Caco-2 (cell line): ENCODE measurements at regions of chr17 and their contacts with region 1.

Region 1: DNA sequence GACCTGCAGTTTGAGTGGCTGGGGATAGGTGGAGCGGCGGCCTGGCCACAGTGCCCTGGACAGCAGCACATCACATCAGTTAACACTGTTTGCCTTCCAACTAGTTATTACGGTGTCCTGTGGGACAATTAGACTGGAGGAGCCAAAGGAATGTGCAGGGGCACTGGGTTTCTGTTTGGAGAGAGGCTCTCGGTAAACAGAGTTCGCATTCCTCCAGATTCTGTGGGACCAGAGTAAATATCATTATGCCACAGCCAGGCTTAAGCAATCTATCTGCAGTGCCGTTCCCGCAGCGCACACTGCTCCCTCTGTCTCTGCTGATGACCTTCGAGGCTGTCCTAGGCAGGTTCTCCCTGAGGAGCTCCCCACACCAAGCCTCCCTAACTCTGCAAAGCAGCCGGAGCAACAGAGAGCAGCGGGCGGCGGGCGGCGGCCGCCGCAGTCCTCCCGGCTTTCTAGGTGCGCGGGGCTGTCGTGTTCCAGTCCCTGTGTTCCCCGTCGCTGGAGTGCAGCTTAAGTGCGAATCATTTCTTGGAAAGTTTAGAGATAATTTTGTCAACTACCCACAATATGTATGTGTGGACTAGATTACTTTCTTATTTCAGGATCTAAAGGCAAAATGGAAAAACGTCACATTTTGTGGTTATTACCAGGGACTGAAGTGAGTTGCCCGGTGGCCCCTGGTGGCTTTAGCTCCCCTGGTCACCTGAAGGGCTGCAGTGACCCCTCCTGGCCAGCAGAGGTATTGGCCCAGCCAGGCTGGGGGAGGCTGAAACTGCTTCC is 43.2 kb downstream of the PGS1 start:
- DNase-seq: peak; percentile 93 to 96
- H3K4me3 ChIP-seq: peak overlapping the region; percentile 1; the same call in 1 of the 2 replicates
- H3K4me3 Mint-ChIP-seq: peak overlapping the region; percentile 72
- H3K27ac Mint-ChIP-seq: peak overlapping the region; percentile 95
- H3K4me1 ChIP-seq: peaks cover 37% of the 10 kb centered on the region
- H3K4me1 Mint-ChIP-seq: peaks cover 28% of the 10 kb centered on the region
- H3K27me3 ChIP-seq: no peaks in the 10 kb centered on the region
- H3K27me3 Mint-ChIP-seq: no peaks in the 10 kb centered on the region
- CTCF ChIP-seq: peak; percentile 98 to 99

Region 2: GRCh38 chr17:78250891-78251794 is 170.5 kb before region 1 on chr17:
- CTCF ChIA-PET with region 1: interaction called, 30 read pairs
- POLR2A ChIA-PET with region 1: interaction called, 4 read pairs
- intact Hi-C with region 1: loop called (anchors 1 kb)
- DNase-seq: peak; percentile 87 to 93
- H3K4me3 ChIP-seq: no peak overlapping the region
- H3K4me3 Mint-ChIP-seq: no peak overlapping the region
- H3K27ac Mint-ChIP-seq: peak overlapping the region; percentile 45
- H3K4me1 ChIP-seq: peaks cover 17% of the 10 kb centered on the region
- H3K4me1 Mint-ChIP-seq: peaks cover 21% of the 10 kb centered on the region
- H3K27me3 ChIP-seq: no peaks in the 10 kb centered on the region
- H3K27me3 Mint-ChIP-seq: no peaks in the 10 kb centered on the region
- CTCF ChIP-seq: peak; percentile 99

Region 3: DNA sequence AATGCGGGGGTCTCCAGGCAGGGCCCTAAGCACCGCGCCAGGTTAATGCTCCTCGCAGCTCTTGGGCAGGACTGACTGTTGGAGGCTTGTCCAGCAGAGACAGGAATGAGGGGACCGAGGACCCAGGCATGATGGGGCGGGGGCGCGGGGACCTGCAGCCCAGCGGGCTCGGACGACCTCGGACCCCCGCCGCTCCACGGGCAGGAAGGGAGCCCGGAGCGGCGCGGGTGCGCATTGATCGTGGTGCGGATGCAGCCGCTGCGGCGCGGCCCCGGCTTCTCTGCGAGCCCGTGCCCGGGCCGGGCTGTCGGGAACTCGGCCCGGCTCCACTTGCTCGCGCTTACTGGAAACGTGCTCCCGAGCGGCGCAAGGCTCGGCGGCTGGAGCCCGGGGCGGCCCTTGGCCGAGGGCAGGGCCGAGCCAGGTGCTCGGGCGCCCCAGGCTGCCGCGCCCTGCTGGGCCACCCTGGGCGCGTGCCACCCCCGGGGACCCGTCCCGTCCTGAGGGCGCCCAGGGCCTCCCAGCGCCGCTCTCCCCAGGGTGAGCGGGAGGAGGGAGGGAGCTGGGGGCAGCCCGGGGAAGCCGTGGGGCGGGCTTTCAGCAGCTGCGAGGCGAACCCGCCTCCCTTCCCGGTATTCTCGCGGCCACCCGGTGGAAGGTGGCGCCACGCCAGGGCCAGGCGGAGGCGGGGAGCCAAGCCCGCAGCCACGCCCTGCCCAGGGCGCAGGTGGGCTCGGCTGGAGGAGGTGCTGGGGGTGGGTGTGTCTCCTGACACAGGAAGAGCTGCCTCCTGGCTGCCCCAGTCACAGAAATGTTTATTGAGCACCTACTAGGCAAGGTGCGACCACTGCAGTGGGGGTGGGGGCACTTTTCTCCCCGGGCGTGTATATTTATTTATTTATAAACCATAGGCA is 107.7 kb before region 1 on chr17:
- CTCF ChIA-PET with region 1: interaction called, 10 read pairs
- POLR2A ChIA-PET with region 1: interaction called, 6 read pairs
- intact Hi-C with region 1: loop called (anchors 1 kb)
- DNase-seq: peak; percentile 95
- H3K4me3 ChIP-seq: peak overlapping the region; percentile 60
- H3K4me3 Mint-ChIP-seq: peak overlapping the region; percentile 82
- H3K27ac Mint-ChIP-seq: peak overlapping the region; percentile 88
- H3K4me1 ChIP-seq: peaks cover 41% of the 10 kb centered on the region
- H3K4me1 Mint-ChIP-seq: peaks cover 36% of the 10 kb centered on the region
- H3K27me3 ChIP-seq: no peaks in the 10 kb centered on the region
- H3K27me3 Mint-ChIP-seq: no peaks in the 10 kb centered on the region
- CTCF ChIP-seq: peak in 1 of 2 experiments; percentile 15

Region 4: GRCh38 chr17:78324391-78325075 is 97.1 kb before region 1 on chr17:
- CTCF ChIA-PET with region 1: no interaction called
- POLR2A ChIA-PET with region 1: no interaction called
- intact Hi-C with region 1: no loop called
- DNase-seq: no peak
- H3K4me3 ChIP-seq: no peak overlapping the region
- H3K4me3 Mint-ChIP-seq: no peak overlapping the region
- H3K27ac Mint-ChIP-seq: no peak overlapping the region
- H3K4me1 ChIP-seq: peaks cover 2% of the 10 kb centered on the region; the same call in 1 of the 2 replicates
- H3K4me1 Mint-ChIP-seq: no peaks in the 10 kb centered on the region
- H3K27me3 ChIP-seq: no peaks in the 10 kb centered on the region
- H3K27me3 Mint-ChIP-seq: no peaks in the 10 kb centered on the region
- CTCF ChIP-seq: no peak

Region 5: DNA sequence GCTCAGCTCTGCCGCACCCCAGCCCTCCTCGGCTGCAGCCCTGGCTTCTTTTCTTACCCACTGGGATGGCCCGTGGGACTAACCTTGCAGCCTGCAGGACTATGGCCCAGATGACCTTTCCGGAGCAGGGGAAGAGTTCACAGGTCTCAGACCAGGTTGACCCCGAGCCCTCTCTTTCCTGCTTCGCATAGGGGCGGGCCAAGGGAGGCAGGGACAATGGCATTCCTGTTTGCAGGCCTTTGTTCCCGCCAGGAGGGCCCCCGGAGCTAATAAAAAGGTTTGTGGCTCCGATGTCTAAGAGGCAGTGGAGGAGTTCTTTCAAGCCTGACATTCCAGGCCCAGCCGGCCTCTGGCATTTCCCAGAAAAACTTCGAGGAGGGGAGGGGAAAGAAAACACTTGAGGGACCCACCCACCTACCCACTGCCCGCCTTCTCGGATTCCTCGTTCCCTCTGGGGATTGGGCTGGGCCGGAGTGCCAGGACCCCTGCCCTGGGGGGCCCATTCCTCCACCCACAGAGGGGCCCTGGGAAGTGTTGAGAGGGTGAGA is 56.0 kb before region 1 on chr17:
- CTCF ChIA-PET with region 1: interaction called, 57 read pairs
- POLR2A ChIA-PET with region 1: interaction called, 13 read pairs
- intact Hi-C with region 1: loop called (anchors 1 kb)
- DNase-seq: peak; percentile 92 to 97
- H3K4me3 ChIP-seq: no peak overlapping the region
- H3K4me3 Mint-ChIP-seq: peak overlapping the region; percentile 67
- H3K27ac Mint-ChIP-seq: peak overlapping the region; percentile 100
- H3K4me1 ChIP-seq: peaks cover 61% of the 10 kb centered on the region
- H3K4me1 Mint-ChIP-seq: peaks cover 46% of the 10 kb centered on the region
- H3K27me3 ChIP-seq: no peaks in the 10 kb centered on the region
- H3K27me3 Mint-ChIP-seq: no peaks in the 10 kb centered on the region
- CTCF ChIP-seq: no peak

Region 6: GRCh38 chr17:78390241-78391050 is 31.2 kb before region 1 on chr17:
- CTCF ChIA-PET with region 1: interaction called, 12 read pairs
- POLR2A ChIA-PET with region 1: no interaction called
- intact Hi-C with region 1: no loop called
- DNase-seq: peak; percentile 61 to 63
- H3K4me3 ChIP-seq: no peak overlapping the region
- H3K4me3 Mint-ChIP-seq: no peak overlapping the region
- H3K27ac Mint-ChIP-seq: peak overlapping the region; percentile 85
- H3K4me1 ChIP-seq: peaks cover 47% of the 10 kb centered on the region
- H3K4me1 Mint-ChIP-seq: peaks cover 30% of the 10 kb centered on the region
- H3K27me3 ChIP-seq: no peaks in the 10 kb centered on the region
- H3K27me3 Mint-ChIP-seq: no peaks in the 10 kb centered on the region
- CTCF ChIP-seq: peak in 1 of 2 experiments; percentile 37